ENCODE measurements at regions of chr4 and their contacts with region 1.

Region 1: DNA sequence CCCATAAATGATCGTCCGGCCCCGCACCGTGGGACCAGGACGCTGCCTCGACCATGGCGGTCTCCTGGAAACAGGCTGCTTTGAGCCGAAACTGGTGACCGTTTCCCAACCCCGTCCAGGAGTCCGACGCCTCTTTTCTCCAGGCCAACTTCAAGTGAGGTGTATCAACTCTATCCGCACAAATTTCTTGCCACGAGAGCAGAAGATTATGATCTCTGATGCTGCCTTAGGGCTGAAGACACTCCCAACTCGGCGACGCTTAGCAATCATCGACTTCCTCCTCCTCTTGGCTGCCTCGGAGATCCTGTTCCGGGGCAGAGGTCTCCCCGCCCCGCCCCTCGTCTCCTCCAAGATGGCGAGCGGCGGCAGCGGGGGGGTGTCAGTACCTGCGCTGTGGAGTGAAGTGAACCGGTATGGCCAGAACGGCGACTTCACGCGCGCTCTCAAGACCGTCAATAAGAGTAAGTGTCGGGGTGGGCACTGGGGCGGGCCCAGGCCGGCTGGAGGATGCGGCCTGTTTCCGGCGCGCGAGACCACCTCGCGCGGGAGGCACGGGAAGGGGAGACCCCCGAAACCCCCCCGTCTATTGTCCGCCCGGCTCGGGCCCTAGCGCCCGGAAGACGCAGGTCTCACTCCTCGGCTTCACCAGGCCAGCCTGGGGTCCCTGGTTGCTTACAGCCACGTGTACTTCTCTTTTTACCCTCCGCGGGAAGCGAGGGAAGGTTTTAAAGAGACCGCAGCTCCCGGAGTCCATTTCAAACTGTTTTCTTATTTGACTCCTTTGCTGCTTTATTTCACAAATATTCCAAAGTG is at the start of gene SRP72:
- DNase-seq: peak; percentile 80 to 95 (median 88)
- ATAC-seq: peak; percentile 98
- H3K4me3 ChIP-seq: peak within 1 kb of the TSS; percentile 98
- H3K4me3 Mint-ChIP-seq: peak within 1 kb of the TSS; percentile 93 to 100 (median 96)
- H3K27ac ChIP-seq: peak within 1 kb of the TSS; percentile 90
- H3K27ac Mint-ChIP-seq: peak within 1 kb of the TSS; percentile 94 to 99 (median 96)
- H3K4me1 ChIP-seq: peaks cover 25 to 29% of the 10 kb centered on the region in 2 donors
- H3K4me1 Mint-ChIP-seq: peaks cover 46 to 68% (median 62%) of the 10 kb centered on the region in 7 donors
- H3K27me3 ChIP-seq: no peaks in the 10 kb centered on the region
- H3K27me3 Mint-ChIP-seq: no peaks in the 10 kb centered on the region
- total RNA-seq, gene SRP72: 98.4 to 145 (median 109) TPM

Region 2: DNA sequence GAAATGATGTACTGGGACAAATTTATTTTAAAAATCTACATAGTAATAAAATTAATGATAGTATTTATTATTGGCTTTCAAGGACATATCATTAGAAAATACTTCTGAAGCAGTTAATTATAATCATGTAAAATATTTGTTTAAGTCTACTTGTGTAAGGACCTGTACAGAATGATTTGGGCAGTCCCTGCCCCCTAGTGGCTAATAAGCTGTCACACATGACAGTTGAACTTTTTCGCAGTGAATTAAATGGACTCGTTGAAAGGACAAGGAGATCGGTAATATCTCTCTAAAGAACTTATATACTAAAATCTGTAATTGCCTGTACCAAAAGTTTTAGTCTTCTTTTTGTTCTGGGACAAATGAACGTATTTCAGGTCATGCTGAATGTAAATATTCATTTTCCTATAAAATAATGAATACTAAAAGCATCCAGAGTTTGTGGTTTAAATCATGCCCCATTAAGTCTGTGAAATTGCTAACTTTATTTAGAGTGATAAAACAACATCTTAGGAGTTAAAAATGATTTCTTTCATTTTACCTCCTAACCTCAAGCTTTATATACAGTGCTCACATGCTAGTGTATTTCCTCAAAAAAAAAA is 600.4 kb before region 1 on chr4:
- CTCF ChIA-PET with region 1: no interaction called
- POLR2A ChIA-PET with region 1: no interaction called
- intact Hi-C with region 1: no loop called
- DNase-seq: peak in 7 of 9 donors; percentile 21 to 56 (median 50)
- ATAC-seq: peak; percentile 88
- H3K4me3 ChIP-seq: no peak overlapping the region
- H3K4me3 Mint-ChIP-seq: no peak overlapping the region
- H3K27ac ChIP-seq: no peak overlapping the region
- H3K27ac Mint-ChIP-seq: no peak overlapping the region
- H3K4me1 ChIP-seq: no peaks in the 10 kb centered on the region
- H3K4me1 Mint-ChIP-seq: peaks cover 6 to 20% (median 15%) of the 10 kb centered on the region in 7 donors
- H3K27me3 ChIP-seq: no peaks in the 10 kb centered on the region
- H3K27me3 Mint-ChIP-seq: no peaks in the 10 kb centered on the region

Region 3: DNA sequence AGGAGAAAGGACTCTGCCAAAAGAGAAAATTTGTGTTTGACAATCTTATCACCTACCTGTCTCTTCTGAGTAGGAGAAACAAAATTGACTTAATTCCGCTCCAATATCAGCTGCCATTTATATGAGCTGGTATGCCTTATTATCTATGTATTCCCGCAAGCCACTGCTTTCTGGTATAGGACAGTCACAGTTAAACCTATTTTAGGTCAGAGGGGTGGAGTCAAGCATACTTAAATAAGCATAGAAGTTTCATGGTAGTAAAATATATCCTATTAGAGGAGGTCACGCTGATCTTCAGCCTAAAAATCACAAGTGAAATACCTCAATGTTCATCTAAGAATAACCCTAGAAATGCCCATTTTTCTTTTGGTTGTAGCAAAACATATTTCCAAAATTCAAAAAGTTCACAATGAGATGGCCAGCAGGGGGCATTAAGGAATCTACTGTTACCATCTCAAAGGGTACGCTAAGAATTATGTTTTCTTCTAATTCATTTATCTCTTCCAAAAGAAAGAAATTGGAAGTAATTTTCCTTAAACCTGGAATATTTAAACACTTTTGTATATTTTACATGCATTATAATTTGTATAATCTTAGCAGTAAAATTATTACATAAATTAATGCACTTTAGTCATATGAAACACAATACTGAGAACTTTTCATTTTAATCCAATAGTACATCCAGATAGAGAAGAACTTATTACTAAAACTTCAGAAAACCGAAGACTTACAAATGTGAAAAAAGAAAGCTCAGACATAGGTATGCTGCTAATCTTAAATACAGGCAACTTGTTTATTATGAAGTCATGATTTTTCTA is 42.6 kb before region 1 on chr4:
- CTCF ChIA-PET with region 1: interaction called, 5 read pairs
- POLR2A ChIA-PET with region 1: no interaction called
- intact Hi-C with region 1: loop called in 1 of 2 experiments (anchors 1 kb)
- DNase-seq: peak in 7 of 9 donors; percentile 22 to 59 (median 48)
- ATAC-seq: peak; percentile 49
- H3K4me3 ChIP-seq: no peak overlapping the region
- H3K4me3 Mint-ChIP-seq: no peak overlapping the region
- H3K27ac ChIP-seq: no peak overlapping the region
- H3K27ac Mint-ChIP-seq: peak overlapping the region in 1 of 9 donors; percentile 1
- H3K4me1 ChIP-seq: no peaks in the 10 kb centered on the region
- H3K4me1 Mint-ChIP-seq: peaks cover 4 to 27% (median 13%) of the 10 kb centered on the region in 7 donors
- H3K27me3 ChIP-seq: no peaks in the 10 kb centered on the region
- H3K27me3 Mint-ChIP-seq: no peaks in the 10 kb centered on the region

Region 4: GRCh38 chr4:56505269-56506130 is 38.0 kb after region 1 on chr4 and contains the start of gene ARL9:
- CTCF ChIA-PET with region 1: no interaction called
- POLR2A ChIA-PET with region 1: no interaction called
- intact Hi-C with region 1: loop called in 1 of 2 experiments (anchors 1 kb)
- DNase-seq: peak; percentile 49 to 77 (median 68)
- ATAC-seq: peak; percentile 96
- H3K4me3 ChIP-seq: peak within 1 kb of the TSS; percentile 67
- H3K4me3 Mint-ChIP-seq: peak within 1 kb of the TSS; percentile 66 to 96 (median 88)
- H3K27ac ChIP-seq: peak within 1 kb of the TSS; percentile 44
- H3K27ac Mint-ChIP-seq: peak within 1 kb of the TSS in 8 of 9 donors; percentile 49 to 88 (median 72)
- H3K4me1 ChIP-seq: peaks cover 7 to 8% of the 10 kb centered on the region in 2 donors
- H3K4me1 Mint-ChIP-seq: peaks cover 13 to 20% (median 17%) of the 10 kb centered on the region in 7 donors
- H3K27me3 ChIP-seq: no peaks in the 10 kb centered on the region
- H3K27me3 Mint-ChIP-seq: peaks cover 0 to 12% (median 0%) of the 10 kb centered on the region in 5 donors
- total RNA-seq, gene ARL9: 0.19 to 0.43 TPM in 2 of 5 experiments, not detected in the others

Region 5: DNA sequence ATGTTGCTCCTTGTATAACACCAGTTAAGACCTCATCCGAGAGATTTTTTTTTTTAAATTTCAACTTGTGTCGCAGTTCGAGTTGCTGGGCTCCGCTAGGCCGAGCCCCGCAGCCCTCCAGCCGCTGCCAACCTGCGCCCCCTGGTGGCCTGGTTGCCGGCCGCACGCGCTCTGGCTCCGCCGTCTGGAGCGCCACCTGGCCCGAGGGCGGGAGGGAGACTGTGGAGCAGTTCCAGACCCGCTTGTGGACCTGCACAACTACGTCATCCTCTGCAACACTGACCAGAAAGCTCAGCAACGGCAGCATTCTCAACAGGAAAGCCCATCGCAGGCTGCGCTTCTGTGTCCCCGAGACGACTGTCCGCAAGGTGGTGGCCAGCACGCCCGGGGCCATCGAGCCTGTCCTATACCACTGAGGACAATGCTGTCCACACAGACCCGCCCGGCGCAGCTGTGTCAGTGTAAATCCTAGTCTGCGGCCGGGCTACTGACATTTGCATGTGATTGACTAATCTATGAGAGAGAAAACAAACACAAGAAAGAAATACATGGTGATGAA is 77.2 kb after region 1 on chr4:
- CTCF ChIA-PET with region 1: interaction called, 3 read pairs
- POLR2A ChIA-PET with region 1: interaction called, 3 read pairs
- intact Hi-C with region 1: loop called (anchors 1 to 2 kb)
- DNase-seq: peak; percentile 72 to 93 (median 84)
- ATAC-seq: peak; percentile 100
- H3K4me3 ChIP-seq: peak overlapping the region; percentile 68
- H3K4me3 Mint-ChIP-seq: peak overlapping the region; percentile 18 to 81 (median 74)
- H3K27ac ChIP-seq: no peak overlapping the region
- H3K27ac Mint-ChIP-seq: peak overlapping the region in 7 of 9 donors; percentile 25 to 79 (median 63)
- H3K4me1 ChIP-seq: peaks cover 0 to 4% of the 10 kb centered on the region in 2 donors
- H3K4me1 Mint-ChIP-seq: peaks cover 8 to 22% (median 21%) of the 10 kb centered on the region in 7 donors
- H3K27me3 ChIP-seq: no peaks in the 10 kb centered on the region
- H3K27me3 Mint-ChIP-seq: peaks cover 0 to 25% (median 7%) of the 10 kb centered on the region in 5 donors

Measured in naive thymus-derived CD4-positive, alpha-beta T cell (primary cell).